ENCODE measurements at regions of chr1 and their contacts with region 1.

Region 1: DNA sequence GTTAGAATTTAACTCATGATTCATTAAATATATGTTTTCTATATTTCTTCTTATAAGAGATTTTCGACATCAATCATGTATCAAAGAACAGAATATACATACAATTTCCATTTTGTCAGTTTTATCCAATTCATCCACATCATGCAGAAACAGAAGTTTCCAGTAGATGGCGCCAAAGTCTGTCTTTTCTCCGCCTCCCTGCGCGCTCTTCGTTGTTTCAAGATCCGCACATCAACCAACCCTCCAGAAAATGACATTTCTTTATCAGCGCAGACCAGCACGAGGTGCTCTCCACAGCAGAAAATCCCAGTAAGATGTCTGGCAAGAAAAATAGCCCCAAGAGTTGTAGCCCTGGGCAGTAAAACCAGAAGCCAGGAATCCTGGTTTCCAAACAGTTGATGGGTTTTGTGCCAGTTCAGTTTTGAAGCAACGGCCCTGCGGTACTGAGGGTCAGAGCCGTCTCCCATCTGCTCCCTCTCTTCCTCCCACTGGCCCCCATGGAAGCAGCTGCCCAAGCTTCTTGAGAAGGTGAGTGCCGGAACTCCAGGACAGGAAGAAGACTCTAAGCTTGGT is 38.6 kb upstream of the GPR137B start:
- DNase-seq: peak; percentile 38
- H3K4me3 Mint-ChIP-seq: no peak overlapping the region
- H3K27ac Mint-ChIP-seq: no peak overlapping the region
- H3K4me1 Mint-ChIP-seq: peaks cover 6% of the 10 kb centered on the region
- H3K27me3 Mint-ChIP-seq: peaks cover 3% of the 10 kb centered on the region

Region 2: DNA sequence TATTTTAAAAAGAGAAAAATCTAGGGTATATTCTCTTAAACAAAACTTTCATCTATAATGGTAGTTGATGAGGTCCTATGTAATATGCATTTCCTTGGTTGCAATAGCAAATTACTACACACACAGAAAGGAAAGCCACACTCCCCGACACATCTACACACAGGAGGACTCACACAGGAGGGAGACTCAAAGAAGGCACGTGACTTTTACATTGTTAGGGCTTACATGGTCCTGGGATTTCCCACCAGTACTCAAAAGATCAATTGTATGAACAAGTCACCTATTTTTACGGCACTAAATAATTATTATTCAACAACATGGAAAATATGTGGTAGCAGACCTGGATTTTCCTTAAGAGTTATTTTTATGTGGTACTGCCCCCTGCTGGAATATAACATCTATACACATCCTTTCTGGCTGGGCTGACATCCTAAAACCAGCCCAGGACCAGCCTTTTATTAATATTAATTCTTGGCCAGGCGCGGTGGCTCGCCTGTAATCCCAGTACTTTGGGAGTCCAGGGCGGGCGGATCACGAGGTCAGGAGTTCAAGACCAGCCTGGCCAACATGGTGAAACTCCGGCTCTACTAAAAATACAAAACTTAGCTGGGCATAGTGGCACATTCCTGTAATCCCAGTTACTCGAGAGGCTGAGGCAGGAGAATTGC is 386.1 kb after region 1 on chr1:
- intact Hi-C with region 1: loop called (anchors 1 kb)
- DNase-seq: no peak
- H3K4me3 Mint-ChIP-seq: no peak overlapping the region
- H3K27ac Mint-ChIP-seq: no peak overlapping the region
- H3K4me1 Mint-ChIP-seq: peaks cover 14% of the 10 kb centered on the region
- H3K27me3 Mint-ChIP-seq: peaks cover 5% of the 10 kb centered on the region

Region 3: DNA sequence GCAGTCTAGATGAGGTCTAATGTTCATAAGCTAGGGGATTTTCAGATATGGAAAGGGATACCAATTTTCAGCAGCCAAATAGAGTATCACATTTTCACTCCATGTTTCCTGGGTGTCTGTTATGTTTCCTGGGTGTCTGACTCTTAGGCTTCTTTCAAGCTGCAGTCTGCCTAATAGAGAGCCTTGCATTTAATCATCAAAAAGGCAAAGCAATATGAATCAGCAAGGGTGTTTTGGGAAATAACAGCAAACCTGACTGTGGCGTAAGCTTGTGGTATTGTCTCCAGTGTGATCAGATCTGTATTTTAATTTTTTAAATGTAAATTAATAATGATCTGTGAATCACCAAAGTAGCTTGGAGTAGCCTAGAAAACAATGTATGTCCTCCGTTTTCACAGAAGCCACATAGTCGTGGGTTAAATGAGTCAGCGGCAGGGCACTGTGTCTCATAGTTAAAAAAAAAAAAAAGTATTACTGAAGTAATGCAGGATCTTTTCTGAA is 430.5 kb after region 1 on chr1:
- intact Hi-C with region 1: loop called (anchors 1 kb)
- DNase-seq: peak; percentile 24
- H3K4me3 Mint-ChIP-seq: peak overlapping the region; percentile 22
- H3K27ac Mint-ChIP-seq: peak overlapping the region; percentile 90
- H3K4me1 Mint-ChIP-seq: peaks cover 40% of the 10 kb centered on the region
- H3K27me3 Mint-ChIP-seq: no peaks in the 10 kb centered on the region

Region 4: GRCh38 chr1:236868625-236869467 is 765.1 kb after region 1 on chr1:
- intact Hi-C with region 1: loop called (anchors 1 kb)
- DNase-seq: peak; percentile 14
- H3K4me3 Mint-ChIP-seq: no peak overlapping the region
- H3K27ac Mint-ChIP-seq: no peak overlapping the region
- H3K4me1 Mint-ChIP-seq: peaks cover 18% of the 10 kb centered on the region
- H3K27me3 Mint-ChIP-seq: no peaks in the 10 kb centered on the region

Region 5: GRCh38 chr1:237386362-237387143 is 1282.8 kb after region 1 on chr1:
- intact Hi-C with region 1: loop called (anchors 2 kb)
- DNase-seq: no peak
- H3K4me3 Mint-ChIP-seq: no peak overlapping the region
- H3K27ac Mint-ChIP-seq: no peak overlapping the region
- H3K4me1 Mint-ChIP-seq: no peaks in the 10 kb centered on the region
- H3K27me3 Mint-ChIP-seq: no peaks in the 10 kb centered on the region